PC-9 (cell line): ENCODE measurements at regions of chr1 and their contacts with region 1.

Region 1: GRCh38 chr1:155167166-155168104 is 5.7 kb downstream of the KRTCAP2 start:
- DNase-seq: peak; percentile 66 to 83
- H3K4me3 ChIP-seq: peak overlapping the region; percentile 33; the same call in 1 of the 2 replicates
- H3K27ac ChIP-seq: no peak overlapping the region
- H3K4me1 ChIP-seq: peaks cover 12% of the 10 kb centered on the region
- H3K27me3 ChIP-seq: no peaks in the 10 kb centered on the region
- CTCF ChIP-seq: peak; percentile 98

Region 2: GRCh38 chr1:155117617-155118016 is 49.8 kb before region 1 on chr1:
- CTCF ChIA-PET with region 1: interaction called, 10 read pairs
- POLR2A ChIA-PET with region 1: no interaction called
- intact Hi-C with region 1: loop called (anchors 1 kb)
- DNase-seq: peak in 1 of 2 experiments; percentile 51
- H3K4me3 ChIP-seq: no peak overlapping the region
- H3K27ac ChIP-seq: no peak overlapping the region
- H3K4me1 ChIP-seq: no peaks in the 10 kb centered on the region
- H3K27me3 ChIP-seq: no peaks in the 10 kb centered on the region
- CTCF ChIP-seq: no peak

Region 3: DNA sequence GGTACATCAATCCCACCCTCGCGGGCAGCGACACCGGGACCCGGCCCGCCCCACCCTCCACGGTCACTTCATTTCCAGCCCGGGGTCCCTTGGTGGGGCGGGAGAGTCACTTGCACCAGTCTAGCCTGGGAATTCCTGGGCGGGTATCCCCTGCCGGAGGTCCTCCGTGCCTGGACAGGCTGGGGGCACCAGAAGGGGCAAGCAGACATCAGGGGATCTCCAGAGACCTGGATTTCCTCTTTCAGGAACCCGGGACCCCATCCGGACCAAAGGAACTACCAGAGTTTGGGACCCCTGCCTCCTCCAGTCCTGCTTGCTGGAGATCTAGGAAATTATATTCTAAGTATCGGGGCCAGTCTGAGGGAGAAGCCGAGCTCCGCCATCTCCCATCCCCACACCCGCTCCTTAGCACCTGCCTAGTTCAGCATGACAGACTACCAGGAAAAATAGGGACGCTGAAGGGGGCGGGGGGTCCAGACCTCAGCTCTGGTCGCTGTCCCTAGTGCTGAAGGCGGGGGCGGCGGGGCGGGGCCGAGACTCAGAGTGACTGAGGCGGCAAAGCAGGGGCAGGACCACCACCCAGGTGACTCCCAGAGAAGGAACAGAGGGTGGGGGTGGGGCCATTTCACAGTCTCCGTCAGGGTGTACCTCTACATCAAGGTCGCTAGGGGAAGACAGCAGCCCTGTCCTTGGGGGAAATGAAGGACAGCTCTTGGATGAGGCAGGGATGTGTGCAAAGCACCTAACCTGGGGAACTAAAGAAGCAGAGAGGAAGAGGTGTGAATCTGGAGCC is 110.7 kb after region 1 on chr1:
- CTCF ChIA-PET with region 1: no interaction called
- POLR2A ChIA-PET with region 1: no interaction called
- intact Hi-C with region 1: no loop called
- DNase-seq: peak; percentile 55 to 60
- H3K4me3 ChIP-seq: peak overlapping the region; percentile 96
- H3K27ac ChIP-seq: no peak overlapping the region
- H3K4me1 ChIP-seq: peaks cover 10% of the 10 kb centered on the region
- H3K27me3 ChIP-seq: no peaks in the 10 kb centered on the region
- CTCF ChIP-seq: peak; percentile 54; the same call in 1 of the 2 replicates